ENCODE measurements at regions of chr2 and their contacts with region 1.

Region 1: DNA sequence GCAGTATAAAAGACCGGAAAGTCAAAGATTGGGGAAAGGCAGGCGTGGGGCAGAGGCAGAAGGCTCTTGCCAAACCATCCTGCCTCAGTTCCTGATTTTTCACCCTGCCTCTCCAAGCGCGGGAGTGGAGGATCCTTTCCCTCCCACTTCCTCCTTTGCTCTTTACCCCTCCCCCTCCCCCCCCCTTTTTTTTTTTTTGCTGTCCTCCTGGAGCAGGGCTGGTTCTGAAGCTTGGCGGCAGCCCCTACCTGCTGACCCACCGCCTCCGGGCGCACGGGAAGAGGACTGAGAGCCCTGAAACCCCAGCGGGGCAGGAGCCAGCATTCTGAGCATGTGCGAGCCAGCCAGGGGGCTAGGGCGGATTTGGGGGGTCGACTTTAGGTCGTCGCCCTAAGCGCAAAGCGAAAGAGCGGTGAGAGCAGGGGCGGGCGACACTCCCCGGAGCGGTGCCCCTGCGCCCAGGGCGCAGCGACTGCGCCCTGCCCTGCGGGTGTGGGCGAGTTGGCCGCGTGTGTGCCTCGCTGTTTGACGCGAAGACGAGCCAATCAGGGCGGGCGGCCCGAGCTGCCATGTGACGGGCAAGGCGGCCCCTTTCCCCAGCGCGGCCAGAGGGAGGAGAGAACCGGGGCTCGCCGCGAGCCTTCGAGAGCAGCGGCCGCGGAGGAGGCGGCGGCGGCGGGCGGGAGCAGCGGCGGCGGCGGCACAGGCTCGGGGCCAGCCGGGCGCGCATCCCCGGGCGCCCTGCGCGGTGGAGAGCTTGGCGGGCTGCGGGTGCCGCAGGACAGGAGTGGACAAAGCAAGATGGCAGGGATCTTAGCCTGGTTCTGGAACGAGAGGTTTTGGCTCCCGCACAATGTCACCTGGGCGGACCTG is at the start of gene CERS6:
- DNase-seq: peak; percentile 98
- H3K4me3 ChIP-seq: peak within 1 kb of the TSS; percentile 75 to 92 (median 80)
- H3K27ac ChIP-seq: peak within 1 kb of the TSS; percentile 68 to 86 (median 72)
- H3K4me1 ChIP-seq: peaks cover 0 to 5% (median 0%) of the 10 kb centered on the region in 4 donors
- H3K27me3 ChIP-seq: no peaks in the 10 kb centered on the region
- CTCF ChIP-seq: no peak
- EP300 ChIP-seq: no peak
- POLR2A ChIP-seq: peak in 1 of 2 donors; percentile 64
- total RNA-seq, gene CERS6: 9.4 to 15.3 (median 12.3) TPM

Region 2: GRCh38 chr2:168346725-168347477 is 109.0 kb before region 1 on chr2:
- intact Hi-C with region 1: no loop called
- DNase-seq: peak; percentile 82
- H3K4me3 ChIP-seq: peak overlapping the region; percentile 22 to 52 (median 42)
- H3K27ac ChIP-seq: no peak overlapping the region
- H3K4me1 ChIP-seq: peaks cover 0 to 5% (median 2%) of the 10 kb centered on the region in 4 donors
- H3K27me3 ChIP-seq: no peaks in the 10 kb centered on the region
- CTCF ChIP-seq: peak; percentile 79 to 94 (median 82)
- EP300 ChIP-seq: no peak
- POLR2A ChIP-seq: no peak

Region 3: GRCh38 chr2:168699844-168700417 is 244.0 kb after region 1 on chr2:
- intact Hi-C with region 1: loop called (anchors 2 kb)
- DNase-seq: peak; percentile 97
- H3K4me3 ChIP-seq: no peak overlapping the region
- H3K27ac ChIP-seq: peak overlapping the region; percentile 45 to 71 (median 49)
- H3K4me1 ChIP-seq: peaks cover 0 to 34% (median 22%) of the 10 kb centered on the region in 4 donors
- H3K27me3 ChIP-seq: no peaks in the 10 kb centered on the region
- CTCF ChIP-seq: no peak
- EP300 ChIP-seq: peak in 3 of 4 donors; percentile 31 to 77 (median 48)
- POLR2A ChIP-seq: no peak

Measured in sigmoid colon (tissue), 7 donors.